Heart left ventricle (tissue), 16 donors: ENCODE measurements at regions of chr11 and their contacts with region 1.

Region 1: GRCh38 chr11:118689851-118690552 is 10.6 kb upstream of the TREH start:
- DNase-seq: peak; percentile 88 to 97 (median 95)
- ATAC-seq: peak; percentile 95 to 97 (median 96)
- H3K4me3 ChIP-seq: peak overlapping the region in 11 of 12 donors; percentile 28 to 56 (median 51)
- H3K27ac ChIP-seq: peak overlapping the region in 11 of 12 donors; percentile 54 to 82 (median 74)
- H3K4me1 ChIP-seq: peaks cover 0 to 30% (median 8%) of the 10 kb centered on the region in 12 donors
- H3K27me3 ChIP-seq: no peaks in the 10 kb centered on the region
- CTCF ChIP-seq: peak; percentile 65 to 91 (median 86)
- POLR2A ChIP-seq: no peak

Region 2: GRCh38 chr11:118771547-118772288 is 81.7 kb after region 1 on chr11:
- intact Hi-C with region 1: loop called in 1 of 10 experiments (anchors 10 kb)
- DNase-seq: no peak
- ATAC-seq: no peak
- H3K4me3 ChIP-seq: peak overlapping the region in 1 of 12 donors; percentile 27
- H3K27ac ChIP-seq: peak overlapping the region in 6 of 12 donors; percentile 13 to 82 (median 27)
- H3K4me1 ChIP-seq: peaks cover 4 to 96% (median 81%) of the 10 kb centered on the region in 12 donors
- H3K27me3 ChIP-seq: no peaks in the 10 kb centered on the region
- CTCF ChIP-seq: no peak
- POLR2A ChIP-seq: no peak

Region 3: GRCh38 chr11:118820412-118821357 is 130.7 kb after region 1 on chr11:
- intact Hi-C with region 1: no loop called
- DNase-seq: peak; percentile 78 to 89 (median 82)
- ATAC-seq: peak; percentile 96 to 100 (median 99)
- H3K4me3 ChIP-seq: peak overlapping the region in 1 of 12 donors; percentile 16
- H3K27ac ChIP-seq: peak overlapping the region in 11 of 12 donors; percentile 55 to 89 (median 71)
- H3K4me1 ChIP-seq: peaks cover 0 to 6% (median 0%) of the 10 kb centered on the region in 12 donors
- H3K27me3 ChIP-seq: no peaks in the 10 kb centered on the region
- CTCF ChIP-seq: no peak
- POLR2A ChIP-seq: no peak

Region 4: GRCh38 chr11:118889781-118890180 is 199.8 kb after region 1 on chr11:
- intact Hi-C with region 1: no loop called
- DNase-seq: peak; percentile 65 to 85 (median 79)
- ATAC-seq: peak; percentile 71 to 85 (median 82)
- H3K4me3 ChIP-seq: no peak overlapping the region
- H3K27ac ChIP-seq: peak overlapping the region in 7 of 12 donors; percentile 26 to 83 (median 54)
- H3K4me1 ChIP-seq: peaks cover 0 to 38% (median 28%) of the 10 kb centered on the region in 12 donors
- H3K27me3 ChIP-seq: no peaks in the 10 kb centered on the region
- CTCF ChIP-seq: no peak
- POLR2A ChIP-seq: no peak

Region 5: DNA sequence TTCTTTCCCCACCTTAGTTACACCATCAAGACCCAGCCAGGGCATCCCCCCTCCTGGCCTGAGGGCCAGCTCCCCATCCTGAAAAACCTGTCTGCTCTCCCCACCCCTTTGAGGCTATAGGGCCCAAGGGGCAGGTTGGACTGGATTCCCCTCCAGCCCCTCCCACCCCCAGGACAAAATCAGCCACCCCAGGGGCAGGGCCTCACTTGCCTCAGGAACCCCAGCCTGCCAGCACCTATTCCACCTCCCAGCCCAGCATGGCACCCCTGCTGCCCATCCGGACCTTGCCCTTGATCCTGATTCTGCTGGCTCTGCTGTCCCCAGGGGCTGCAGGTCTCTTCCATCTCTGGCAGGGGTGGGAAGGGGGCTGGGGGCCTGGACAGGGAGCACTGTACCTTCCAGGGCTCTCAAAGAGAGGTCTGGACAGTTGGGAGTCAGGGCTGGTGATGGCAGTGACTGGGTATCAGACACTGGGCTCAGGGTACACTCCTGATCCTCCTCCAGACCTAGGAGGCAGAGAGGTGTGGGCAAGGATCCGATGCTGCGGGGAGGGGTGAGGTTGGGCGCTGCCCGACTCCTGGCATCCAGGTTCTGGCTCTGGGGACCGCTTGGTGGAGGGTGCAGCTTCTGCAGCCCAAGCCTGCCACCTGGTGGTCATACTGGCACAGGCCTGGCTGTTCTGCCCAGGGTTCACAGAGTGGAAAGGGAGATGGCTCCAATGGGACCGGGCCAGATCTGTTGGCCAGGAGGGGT is 266.3 kb after region 1 on chr11 and contains the start of gene UPK2:
- intact Hi-C with region 1: loop called (anchors 1 to 5 kb)
- DNase-seq: peak; percentile 84 to 94 (median 88)
- ATAC-seq: peak; percentile 93 to 98 (median 96)
- H3K4me3 ChIP-seq: no peak within 1 kb of the TSS
- H3K27ac ChIP-seq: no peak within 1 kb of the TSS
- H3K4me1 ChIP-seq: peaks cover 0 to 7% (median 0%) of the 10 kb centered on the region in 12 donors
- H3K27me3 ChIP-seq: peaks cover 0 to 9% (median 0%) of the 10 kb centered on the region in 9 donors
- CTCF ChIP-seq: peak; percentile 92 to 95 (median 93)
- POLR2A ChIP-seq: no peak
- total RNA-seq, gene UPK2: not detected

Region 6: GRCh38 chr11:119030329-119031049 is 340.5 kb after region 1 on chr11 and contains the start of gene SLC37A4:
- intact Hi-C with region 1: no loop called
- DNase-seq: peak; percentile 96 to 99 (median 98)
- ATAC-seq: peak; percentile 96 to 99 (median 97)
- H3K4me3 ChIP-seq: peak within 1 kb of the TSS; percentile 64 to 95 (median 82)
- H3K27ac ChIP-seq: peak within 1 kb of the TSS; percentile 6 to 85 (median 67)
- H3K4me1 ChIP-seq: peaks cover 0 to 25% (median 12%) of the 10 kb centered on the region in 12 donors
- H3K27me3 ChIP-seq: no peaks in the 10 kb centered on the region
- CTCF ChIP-seq: peak in 7 of 12 donors; percentile 72 to 97 (median 86)
- POLR2A ChIP-seq: peak in 1 of 2 donors; percentile 53
- total RNA-seq, gene SLC37A4: 4.5 to 18.5 (median 7.7) TPM